Endothelial cell of umbilical vein (primary cell): ENCODE measurements at regions of chr2 and their contacts with region 1.

Region 1: GRCh38 chr2:227817850-227818674 is 4.4 kb downstream of the CCL20 start:
- DNase-seq: peak; percentile 98
- H3K4me3 ChIP-seq: peak overlapping the region in 1 of 3 experiments; percentile 68
- H3K27ac ChIP-seq: peak overlapping the region; percentile 98
- H3K4me1 ChIP-seq: peaks cover 36% of the 10 kb centered on the region
- H3K27me3 ChIP-seq: no peaks in the 10 kb centered on the region
- CTCF ChIP-seq: no peak
- POLR2A ChIP-seq: no peak

Region 2: DNA sequence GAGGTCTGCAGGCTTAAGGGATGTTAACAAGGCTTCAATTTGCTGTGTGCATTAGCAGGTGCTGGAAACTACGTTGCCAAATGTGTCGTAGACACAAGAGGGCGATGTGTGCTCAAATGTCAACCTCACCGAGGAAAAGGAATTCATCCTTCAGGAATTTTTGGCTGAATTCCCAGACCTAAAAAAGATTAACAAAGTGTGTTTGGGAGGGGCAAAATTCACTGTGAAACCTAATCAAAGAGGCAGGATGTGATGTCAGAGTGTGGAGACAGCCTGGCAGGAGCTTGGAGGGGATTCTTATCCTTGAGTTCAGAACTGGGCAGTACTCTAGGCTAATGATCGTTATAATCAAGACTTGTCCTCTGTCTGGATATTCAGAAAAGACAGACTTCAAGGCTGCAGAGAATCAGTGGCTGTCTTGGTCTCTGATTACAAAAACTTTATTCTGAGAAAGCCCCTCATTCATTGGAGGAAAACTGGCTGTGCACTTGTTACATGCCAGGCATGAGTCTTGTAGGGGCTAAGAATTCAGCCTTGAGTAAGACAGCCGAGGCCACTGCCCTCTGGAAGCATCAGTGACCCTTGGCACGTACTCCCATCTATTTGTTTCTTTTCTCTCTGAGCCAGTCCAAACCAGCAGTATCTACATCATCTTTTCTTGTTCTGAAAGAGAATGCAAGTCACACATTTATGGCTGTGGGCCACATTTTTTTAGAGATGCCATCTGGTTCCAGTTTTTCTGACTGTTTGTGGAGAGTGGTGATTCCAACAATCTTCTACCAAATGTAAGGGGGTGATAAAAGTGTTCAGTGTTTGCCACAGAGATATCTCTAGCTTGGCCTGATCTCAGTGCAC is 411.7 kb before region 1 on chr2:
- CTCF ChIA-PET with region 1: no interaction called
- POLR2A ChIA-PET with region 1: no interaction called
- dilution Hi-C with region 1: no loop called
- intact Hi-C with region 1: loop called (anchors 1 kb)
- DNase-seq: peak; percentile 96
- H3K4me3 ChIP-seq: no peak overlapping the region
- H3K27ac ChIP-seq: peak overlapping the region; percentile 85
- H3K4me1 ChIP-seq: peaks cover 8% of the 10 kb centered on the region
- H3K27me3 ChIP-seq: no peaks in the 10 kb centered on the region
- CTCF ChIP-seq: peak; percentile 57 to 81
- POLR2A ChIP-seq: peak; percentile 50

Region 3: GRCh38 chr2:227774011-227774624 is 43.9 kb before region 1 on chr2:
- CTCF ChIA-PET with region 1: interaction called, 4 read pairs
- POLR2A ChIA-PET with region 1: no interaction called
- dilution Hi-C with region 1: no loop called
- intact Hi-C with region 1: loop called (anchors 2 kb)
- DNase-seq: peak; percentile 22
- H3K4me3 ChIP-seq: no peak overlapping the region
- H3K27ac ChIP-seq: no peak overlapping the region
- H3K4me1 ChIP-seq: no peaks in the 10 kb centered on the region
- H3K27me3 ChIP-seq: no peaks in the 10 kb centered on the region
- CTCF ChIP-seq: peak; percentile 25 to 31
- POLR2A ChIP-seq: no peak

Region 4: GRCh38 chr2:227871375-227871788 is 53.3 kb after region 1 on chr2 and contains the start of gene DAW1:
- CTCF ChIA-PET with region 1: no interaction called
- POLR2A ChIA-PET with region 1: interaction called, 7 read pairs
- dilution Hi-C with region 1: no loop called
- intact Hi-C with region 1: loop called (anchors 1 kb)
- DNase-seq: peak; percentile 78
- H3K4me3 ChIP-seq: peak within 1 kb of the TSS; percentile 47 to 54 (median 52)
- H3K27ac ChIP-seq: peak within 1 kb of the TSS; percentile 99
- H3K4me1 ChIP-seq: peaks cover 33% of the 10 kb centered on the region
- H3K27me3 ChIP-seq: no peaks in the 10 kb centered on the region
- CTCF ChIP-seq: no peak
- POLR2A ChIP-seq: no peak
- total RNA-seq, gene DAW1: 2.0 and 3.2 TPM in 2 replicates

Region 5: DNA sequence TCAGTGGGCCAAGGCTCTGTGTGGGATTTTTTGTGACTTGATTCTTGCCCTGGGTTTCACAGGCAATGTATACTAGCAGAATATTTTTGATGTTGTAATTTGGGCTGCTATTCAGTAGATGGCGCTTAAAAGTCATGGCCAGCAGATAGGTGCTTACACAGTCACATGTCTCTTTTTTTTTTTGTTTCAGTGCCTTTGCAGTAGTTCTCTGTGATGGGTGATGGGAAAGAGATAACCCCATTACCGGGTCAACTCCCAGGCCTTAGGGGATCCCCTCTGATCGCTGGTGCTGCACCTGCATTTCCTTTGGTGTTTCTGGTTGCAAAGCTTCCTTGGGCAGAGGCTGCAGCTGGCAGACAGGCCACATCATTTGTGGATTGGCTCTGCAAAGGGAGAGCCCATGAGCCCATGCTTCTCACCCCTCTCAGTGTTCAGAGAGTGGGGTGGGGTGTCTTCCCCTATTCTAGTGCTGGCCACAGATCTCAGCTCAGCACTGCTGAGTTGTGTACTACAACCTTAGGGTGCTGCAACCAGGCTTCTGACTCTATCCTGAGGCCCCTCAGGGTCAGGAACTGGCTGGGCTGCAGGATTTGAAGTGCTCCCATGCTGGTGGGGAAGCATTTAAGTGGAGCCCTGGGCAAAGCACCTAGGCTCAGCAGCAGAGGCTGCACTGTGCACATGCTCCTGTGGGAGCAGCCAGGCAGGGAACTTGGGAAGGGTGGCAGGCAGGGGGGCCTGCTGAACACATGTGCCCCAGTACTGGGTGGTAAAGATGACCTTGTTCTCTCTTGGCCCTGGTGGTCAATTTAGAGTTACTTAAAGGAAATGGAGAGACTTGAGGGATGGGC is 583.2 kb after region 1 on chr2:
- CTCF ChIA-PET with region 1: no interaction called
- POLR2A ChIA-PET with region 1: no interaction called
- dilution Hi-C with region 1: no loop called
- intact Hi-C with region 1: no loop called
- DNase-seq: no peak
- H3K4me3 ChIP-seq: no peak overlapping the region
- H3K27ac ChIP-seq: no peak overlapping the region
- H3K4me1 ChIP-seq: no peaks in the 10 kb centered on the region
- H3K27me3 ChIP-seq: no peaks in the 10 kb centered on the region
- CTCF ChIP-seq: no peak
- POLR2A ChIP-seq: no peak

Region 6: GRCh38 chr2:229445019-229445418 is 1627.0 kb after region 1 on chr2:
- CTCF ChIA-PET with region 1: no interaction called
- POLR2A ChIA-PET with region 1: no interaction called
- dilution Hi-C with region 1: no loop called
- intact Hi-C with region 1: loop called (anchors 10 kb)
- DNase-seq: peak; percentile 87
- H3K4me3 ChIP-seq: no peak overlapping the region
- H3K27ac ChIP-seq: peak overlapping the region; percentile 56
- H3K4me1 ChIP-seq: peaks cover 8% of the 10 kb centered on the region
- H3K27me3 ChIP-seq: peaks cover 0 to 2% of the 10 kb centered on the region in 2 experiments
- CTCF ChIP-seq: no peak
- POLR2A ChIP-seq: no peak